PC-3 (cell line): ENCODE measurements at regions of chr7 and their contacts with region 1.

Region 1: GRCh38 chr7:9488555-9488954 is 1055.1 kb downstream of the NXPH1 start:
- DNase-seq: peak; percentile 67
- ATAC-seq: peak; percentile 96
- H3K4me3 ChIP-seq: no peak overlapping the region
- H3K27ac ChIP-seq: no peak overlapping the region
- H3K4me1 ChIP-seq: 0 out of 2 replicates have a peak, but pooled peaks cover 4% of the 10 kb centered on the region
- H3K27me3 ChIP-seq: no peaks in the 10 kb centered on the region
- CTCF ChIP-seq: no peak

Region 2: GRCh38 chr7:9324513-9324912 is 164.0 kb before region 1 on chr7:
- CTCF ChIA-PET with region 1: no interaction called
- POLR2A ChIA-PET with region 1: no interaction called
- intact Hi-C with region 1: loop called (anchors 10 kb)
- DNase-seq: no peak
- ATAC-seq: no peak
- H3K4me3 ChIP-seq: no peak overlapping the region
- H3K27ac ChIP-seq: no peak overlapping the region
- H3K4me1 ChIP-seq: no peaks in the 10 kb centered on the region
- H3K27me3 ChIP-seq: no peaks in the 10 kb centered on the region
- CTCF ChIP-seq: no peak

Region 3: GRCh38 chr7:10034843-10035556 is 546.4 kb after region 1 on chr7:
- CTCF ChIA-PET with region 1: no interaction called
- POLR2A ChIA-PET with region 1: no interaction called
- intact Hi-C with region 1: no loop called
- DNase-seq: no peak
- ATAC-seq: no peak
- H3K4me3 ChIP-seq: no peak overlapping the region
- H3K27ac ChIP-seq: no peak overlapping the region
- H3K4me1 ChIP-seq: no peaks in the 10 kb centered on the region
- H3K27me3 ChIP-seq: no peaks in the 10 kb centered on the region
- CTCF ChIP-seq: no peak